Posterior cingulate gyrus (tissue), 11 donors: ENCODE measurements at regions of chr6 and their contacts with region 1.

Region 1: DNA sequence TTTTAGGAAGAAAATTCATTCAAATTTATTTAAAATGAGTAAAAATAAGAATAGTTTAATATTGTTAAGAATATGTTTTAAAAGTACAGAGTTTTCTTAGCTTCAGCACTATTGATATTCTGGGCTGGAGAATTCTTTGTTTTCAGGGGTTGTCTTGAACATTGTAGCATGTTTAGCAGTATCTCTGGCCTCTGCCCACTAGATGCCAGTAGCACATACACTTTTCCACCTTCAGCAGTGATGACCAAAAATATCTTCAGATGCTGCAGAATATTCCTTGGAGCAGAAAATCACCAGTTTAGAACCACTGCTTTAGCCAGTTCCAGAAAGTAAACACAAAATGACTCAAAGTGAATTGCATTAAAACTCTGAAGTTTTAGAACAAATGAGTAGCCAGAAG is 19.4 kb upstream of the SDHAF4 start:
- DNase-seq: no peak

Region 2: DNA sequence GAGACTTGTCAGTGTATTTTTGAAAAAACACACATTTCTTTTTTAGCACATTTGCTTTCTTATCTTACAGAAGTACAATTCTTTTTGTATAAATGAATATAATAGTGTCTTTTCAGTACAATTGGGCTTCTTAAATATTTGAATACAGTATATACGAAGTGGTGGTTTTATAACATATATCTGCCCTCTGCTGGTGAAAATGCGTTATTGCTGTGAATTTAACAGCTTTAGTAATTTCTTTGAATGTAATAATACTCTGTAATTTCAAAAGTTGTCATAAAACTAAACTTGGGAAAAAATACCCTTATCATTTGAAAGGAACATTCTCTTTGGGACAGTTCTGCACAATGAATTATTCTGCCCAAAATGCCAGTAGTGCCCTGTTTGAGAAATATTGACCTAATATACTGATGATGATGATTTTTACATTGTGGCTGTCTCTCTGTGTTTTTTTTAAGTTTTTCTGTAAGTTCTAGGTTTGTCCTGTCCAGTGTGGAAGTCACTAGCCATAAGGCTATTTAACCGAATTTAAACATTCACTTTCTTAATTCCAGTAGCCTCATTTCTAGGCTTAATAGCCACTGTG is 139.3 kb after region 1 on chr6:
- intact Hi-C with region 1: loop called (anchors 1 kb)
- DNase-seq: no peak